ENCODE measurements at regions of chr2 and their contacts with region 1.

Region 1: DNA sequence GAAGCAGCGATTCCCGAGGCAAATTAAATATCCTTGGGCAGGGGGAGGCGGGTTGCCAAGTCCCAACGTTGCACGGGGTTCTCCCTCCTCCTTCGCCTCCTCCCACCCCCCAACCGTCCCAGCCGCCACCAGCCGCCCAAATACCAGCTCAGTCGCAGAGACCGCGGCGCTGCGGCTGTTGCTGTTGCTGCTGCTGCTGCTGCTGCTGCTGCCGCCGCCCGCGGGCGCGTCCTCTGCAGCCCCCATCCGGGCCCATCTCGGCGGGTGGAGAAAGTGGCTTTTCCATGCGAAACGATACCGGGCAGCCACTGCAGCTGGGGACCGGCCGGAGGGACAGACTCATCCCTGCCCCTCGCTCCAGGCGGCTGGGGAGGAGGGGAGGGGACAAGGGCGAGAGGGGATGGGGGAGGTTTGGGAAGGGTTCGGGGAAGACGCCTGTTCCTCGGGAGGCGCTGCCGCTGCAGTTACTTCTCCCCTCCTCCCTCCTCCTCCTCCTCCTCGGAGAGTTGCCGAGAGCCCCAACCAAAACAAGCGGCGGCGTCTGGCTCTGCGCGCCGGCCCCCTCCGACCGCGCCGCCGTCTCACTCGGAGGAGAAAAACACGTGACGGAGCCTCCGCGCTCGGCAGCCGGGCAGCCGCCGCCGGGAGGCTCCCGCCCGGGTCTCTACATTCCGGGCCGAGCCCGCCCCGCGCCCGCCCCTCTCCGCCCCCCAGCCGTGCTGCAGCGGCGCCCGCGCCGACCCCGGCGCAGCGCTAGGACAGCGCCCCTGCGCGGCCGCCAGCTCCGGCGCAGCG is at the start of gene IRS1:
- DNase-seq: peak in 8 of 9 donors; percentile 35 to 77 (median 61)
- ATAC-seq: peak; percentile 76
- H3K4me3 ChIP-seq: peak within 1 kb of the TSS; percentile 77
- H3K4me3 Mint-ChIP-seq: peak within 1 kb of the TSS; percentile 89 to 97 (median 91)
- H3K27ac ChIP-seq: peak within 1 kb of the TSS; percentile 70
- H3K27ac Mint-ChIP-seq: peak within 1 kb of the TSS; percentile 52 to 92 (median 75)
- H3K4me1 ChIP-seq: peaks cover 9 to 13% of the 10 kb centered on the region in 2 donors
- H3K4me1 Mint-ChIP-seq: peaks cover 11 to 40% (median 26%) of the 10 kb centered on the region in 7 donors
- H3K27me3 ChIP-seq: no peaks in the 10 kb centered on the region
- H3K27me3 Mint-ChIP-seq: peaks cover 2 to 14% (median 11%) of the 10 kb centered on the region in 5 donors
- total RNA-seq, gene IRS1: 1.3 to 7.1 (median 4.4) TPM

Region 2: GRCh38 chr2:225668606-225669266 is 1130.6 kb before region 1 on chr2:
- CTCF ChIA-PET with region 1: interaction called, 10 read pairs
- POLR2A ChIA-PET with region 1: interaction called, 3 read pairs
- intact Hi-C with region 1: loop called (anchors 1 kb)
- DNase-seq: peak in 7 of 9 donors; percentile 8 to 57 (median 50)
- ATAC-seq: peak; percentile 81
- H3K4me3 ChIP-seq: no peak overlapping the region
- H3K4me3 Mint-ChIP-seq: no peak overlapping the region
- H3K27ac ChIP-seq: no peak overlapping the region
- H3K27ac Mint-ChIP-seq: no peak overlapping the region
- H3K4me1 ChIP-seq: no peaks in the 10 kb centered on the region
- H3K4me1 Mint-ChIP-seq: no peaks in the 10 kb centered on the region
- H3K27me3 ChIP-seq: no peaks in the 10 kb centered on the region
- H3K27me3 Mint-ChIP-seq: peaks cover 4 to 8% (median 7%) of the 10 kb centered on the region in 5 donors

Region 3: DNA sequence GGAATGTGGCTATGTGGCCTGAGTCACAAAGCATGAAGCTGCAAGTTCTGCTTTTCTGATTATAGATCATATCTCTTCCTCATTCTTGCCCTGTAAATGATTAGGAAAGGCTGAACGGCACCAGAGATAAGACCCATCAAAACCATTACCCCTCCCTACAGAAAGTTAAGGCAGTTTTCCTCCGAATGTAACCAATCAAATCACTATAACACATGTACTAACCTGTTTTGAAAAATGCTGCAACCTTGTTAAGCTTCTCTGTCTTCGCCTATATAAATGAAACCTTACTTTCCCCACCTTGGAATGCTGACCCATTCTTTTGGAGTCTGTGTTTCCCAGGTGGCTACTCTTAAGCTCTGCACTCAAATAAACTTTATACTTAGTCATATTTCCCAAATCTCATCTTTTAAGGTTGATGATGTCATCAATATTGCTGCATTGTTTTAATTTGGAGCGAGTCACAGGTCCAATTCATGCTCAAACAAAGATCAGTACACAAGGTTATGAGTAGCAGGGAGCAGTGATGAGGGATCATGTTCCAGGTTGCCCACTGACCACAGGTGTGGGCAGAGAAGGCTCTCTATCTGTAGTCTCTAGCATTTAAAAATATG is 662.1 kb before region 1 on chr2:
- CTCF ChIA-PET with region 1: no interaction called
- POLR2A ChIA-PET with region 1: no interaction called
- intact Hi-C with region 1: loop called in 1 of 2 experiments (anchors 10 kb)
- DNase-seq: no peak
- ATAC-seq: peak; percentile 86
- H3K4me3 ChIP-seq: no peak overlapping the region
- H3K4me3 Mint-ChIP-seq: no peak overlapping the region
- H3K27ac ChIP-seq: no peak overlapping the region
- H3K27ac Mint-ChIP-seq: no peak overlapping the region
- H3K4me1 ChIP-seq: no peaks in the 10 kb centered on the region
- H3K4me1 Mint-ChIP-seq: peaks cover 0 to 6% (median 0%) of the 10 kb centered on the region in 7 donors
- H3K27me3 ChIP-seq: no peaks in the 10 kb centered on the region
- H3K27me3 Mint-ChIP-seq: peaks cover 0 to 13% (median 9%) of the 10 kb centered on the region in 5 donors

Region 4: DNA sequence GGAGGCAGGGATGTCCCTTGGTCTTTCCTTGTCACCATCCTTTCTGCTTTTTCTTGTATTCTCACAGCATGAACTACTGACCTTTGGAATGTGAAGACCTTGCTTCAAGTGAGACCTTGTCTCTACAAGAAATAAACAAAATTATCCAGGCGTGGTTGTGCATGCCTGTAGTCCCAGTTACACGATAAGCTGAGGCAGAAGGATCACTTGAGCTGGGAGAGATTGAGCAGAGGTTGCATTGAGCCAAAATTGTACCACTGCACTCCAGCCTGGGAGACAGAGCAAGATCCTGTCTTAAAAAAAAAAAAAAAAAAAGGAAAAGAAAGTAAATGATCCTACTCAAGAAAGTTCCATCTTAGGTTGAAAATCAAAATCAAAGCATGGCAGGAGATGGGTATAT is 173.4 kb before region 1 on chr2:
- CTCF ChIA-PET with region 1: no interaction called
- POLR2A ChIA-PET with region 1: no interaction called
- intact Hi-C with region 1: loop called in 1 of 2 experiments (anchors 1 kb)
- DNase-seq: no peak
- ATAC-seq: no peak
- H3K4me3 ChIP-seq: no peak overlapping the region
- H3K4me3 Mint-ChIP-seq: no peak overlapping the region
- H3K27ac ChIP-seq: no peak overlapping the region
- H3K27ac Mint-ChIP-seq: no peak overlapping the region
- H3K4me1 ChIP-seq: no peaks in the 10 kb centered on the region
- H3K4me1 Mint-ChIP-seq: no peaks in the 10 kb centered on the region
- H3K27me3 ChIP-seq: no peaks in the 10 kb centered on the region
- H3K27me3 Mint-ChIP-seq: peaks cover 0 to 21% (median 6%) of the 10 kb centered on the region in 5 donors

Region 5: GRCh38 chr2:226971084-226971483 is 171.7 kb after region 1 on chr2:
- CTCF ChIA-PET with region 1: no interaction called
- POLR2A ChIA-PET with region 1: no interaction called
- intact Hi-C with region 1: no loop called
- DNase-seq: peak in 2 of 9 donors; percentile 8 to 21
- ATAC-seq: no peak
- H3K4me3 ChIP-seq: no peak overlapping the region
- H3K4me3 Mint-ChIP-seq: peak overlapping the region in 9 of 10 donors; percentile 51 to 80 (median 70)
- H3K27ac ChIP-seq: no peak overlapping the region
- H3K27ac Mint-ChIP-seq: peak overlapping the region in 8 of 9 donors; percentile 8 to 87 (median 60)
- H3K4me1 ChIP-seq: no peaks in the 10 kb centered on the region
- H3K4me1 Mint-ChIP-seq: peaks cover 0 to 59% (median 41%) of the 10 kb centered on the region in 7 donors
- H3K27me3 ChIP-seq: no peaks in the 10 kb centered on the region
- H3K27me3 Mint-ChIP-seq: no peaks in the 10 kb centered on the region

Region 6: DNA sequence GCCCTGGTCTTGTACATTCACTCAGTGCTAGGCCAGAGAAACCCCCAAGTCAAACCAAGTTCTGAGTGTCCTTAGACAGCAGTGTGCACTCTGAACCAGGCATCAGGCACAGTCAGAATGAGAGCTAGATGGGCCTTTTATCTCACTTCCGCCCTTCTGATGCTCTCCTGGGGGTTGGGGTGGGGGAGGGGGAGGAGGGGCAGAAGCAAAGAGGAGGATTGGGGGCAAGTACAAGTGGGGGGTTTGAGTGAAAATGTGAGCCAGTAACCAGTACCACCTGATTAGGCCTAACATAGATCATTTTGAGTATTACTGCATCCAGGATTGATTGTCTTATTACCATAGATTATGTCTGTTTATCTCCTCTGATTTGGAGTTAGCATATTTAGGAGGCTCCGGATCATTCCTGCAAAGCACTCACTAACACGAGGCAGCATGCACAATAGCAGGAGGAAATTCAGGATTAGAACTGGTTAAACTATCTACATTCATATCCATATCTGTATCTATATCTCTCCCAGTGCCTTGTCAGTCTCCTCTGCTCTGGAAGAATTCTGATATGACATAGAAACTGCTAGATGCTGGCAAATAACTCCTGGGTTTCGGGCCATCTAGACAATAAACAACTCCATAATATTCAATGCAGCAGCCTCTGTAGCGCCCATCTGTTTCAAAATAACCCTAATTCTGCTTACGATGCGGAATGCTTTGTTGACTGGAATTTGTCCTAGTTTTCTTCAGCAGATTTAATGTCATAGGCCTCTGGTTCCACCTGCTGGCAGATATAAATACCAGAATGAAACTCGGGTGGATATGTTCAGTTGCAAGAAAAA is 185.6 kb after region 1 on chr2:
- CTCF ChIA-PET with region 1: interaction called, 5 read pairs
- POLR2A ChIA-PET with region 1: no interaction called
- intact Hi-C with region 1: loop called (anchors 1 kb)
- DNase-seq: peak in 6 of 9 donors; percentile 9 to 48 (median 38)
- ATAC-seq: peak; percentile 58
- H3K4me3 ChIP-seq: no peak overlapping the region
- H3K4me3 Mint-ChIP-seq: peak overlapping the region in 3 of 10 donors; percentile 16 to 45 (median 20)
- H3K27ac ChIP-seq: no peak overlapping the region
- H3K27ac Mint-ChIP-seq: peak overlapping the region in 6 of 9 donors; percentile 22 to 76 (median 66)
- H3K4me1 ChIP-seq: peaks cover 0 to 7% of the 10 kb centered on the region in 2 donors
- H3K4me1 Mint-ChIP-seq: peaks cover 5 to 33% (median 26%) of the 10 kb centered on the region in 7 donors
- H3K27me3 ChIP-seq: no peaks in the 10 kb centered on the region
- H3K27me3 Mint-ChIP-seq: no peaks in the 10 kb centered on the region